ENCODE measurements at regions of chr5 and their contacts with region 1.

Region 1: DNA sequence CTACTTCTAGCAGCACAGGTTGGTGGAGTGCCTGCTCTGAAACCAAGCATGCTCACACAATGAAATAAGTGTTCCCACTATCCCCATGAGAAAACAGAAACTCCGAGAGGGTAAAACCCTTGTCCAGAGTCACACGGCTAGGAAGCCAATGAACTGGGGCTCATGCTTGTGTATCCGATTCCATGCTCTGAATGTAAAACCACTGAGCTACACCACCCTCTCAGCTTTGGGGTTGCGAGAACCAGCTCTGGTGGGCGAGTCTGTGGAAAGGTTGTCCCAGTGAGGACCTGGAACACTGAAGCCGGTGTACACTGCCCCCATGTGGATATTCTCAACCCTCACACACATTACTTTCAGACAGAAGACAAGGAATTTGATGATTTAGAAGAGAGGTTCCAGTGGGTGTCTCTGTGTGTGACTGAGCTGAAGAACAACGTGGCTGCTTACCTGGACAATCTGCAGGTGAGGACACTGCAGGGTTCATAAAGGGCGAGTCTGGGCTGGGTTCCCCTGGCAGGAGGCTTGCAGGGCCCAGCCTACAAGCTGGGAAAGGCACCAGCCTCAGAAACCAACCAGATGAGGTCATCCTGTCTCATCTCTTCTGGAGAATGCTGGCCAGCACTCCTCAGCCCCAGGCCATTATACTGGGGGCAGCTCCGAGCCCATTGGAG is 37.4 kb downstream of the ARHGEF37 start:
- DNase-seq: no peak
- H3K4me3 Mint-ChIP-seq: no peak overlapping the region
- H3K27ac Mint-ChIP-seq: no peak overlapping the region
- H3K4me1 Mint-ChIP-seq: peaks cover 25% of the 10 kb centered on the region
- H3K27me3 Mint-ChIP-seq: no peaks in the 10 kb centered on the region

Region 2: DNA sequence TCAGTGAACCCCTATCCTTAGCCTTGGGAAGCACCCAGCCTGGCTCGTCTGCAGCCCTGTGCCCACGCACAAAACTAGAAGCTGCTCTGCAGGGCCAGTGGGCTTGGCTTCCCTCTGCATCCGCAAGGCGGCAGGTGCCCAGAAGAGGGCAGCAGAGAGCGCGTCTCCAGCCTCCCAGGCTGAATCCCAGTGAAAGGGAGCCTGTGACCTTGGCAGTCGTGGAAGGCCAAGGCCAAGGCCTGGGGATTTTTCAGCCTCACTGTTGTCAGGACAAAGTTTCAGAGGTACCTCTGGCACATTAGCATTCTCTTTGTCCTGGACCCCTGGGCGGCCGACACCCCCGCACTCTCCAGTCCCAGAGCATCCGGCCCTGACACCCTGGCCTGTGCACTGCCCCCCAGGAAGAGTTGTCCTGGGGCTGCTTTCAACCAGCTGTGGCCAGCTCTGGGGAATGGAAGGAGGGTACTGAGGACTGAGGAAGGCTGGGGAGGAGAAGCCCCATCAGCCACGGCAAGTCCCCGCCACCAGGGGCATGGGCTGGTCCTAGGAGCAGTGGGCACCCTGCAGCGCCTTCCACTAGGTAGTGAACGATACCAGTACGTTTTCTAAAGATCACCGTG is 176.0 kb before region 1 on chr5:
- intact Hi-C with region 1: loop called (anchors 2 kb)
- DNase-seq: peak; percentile 52
- H3K4me3 Mint-ChIP-seq: no peak overlapping the region
- H3K27ac Mint-ChIP-seq: peak overlapping the region; percentile 69
- H3K4me1 Mint-ChIP-seq: peaks cover 25% of the 10 kb centered on the region
- H3K27me3 Mint-ChIP-seq: no peaks in the 10 kb centered on the region

Region 3: DNA sequence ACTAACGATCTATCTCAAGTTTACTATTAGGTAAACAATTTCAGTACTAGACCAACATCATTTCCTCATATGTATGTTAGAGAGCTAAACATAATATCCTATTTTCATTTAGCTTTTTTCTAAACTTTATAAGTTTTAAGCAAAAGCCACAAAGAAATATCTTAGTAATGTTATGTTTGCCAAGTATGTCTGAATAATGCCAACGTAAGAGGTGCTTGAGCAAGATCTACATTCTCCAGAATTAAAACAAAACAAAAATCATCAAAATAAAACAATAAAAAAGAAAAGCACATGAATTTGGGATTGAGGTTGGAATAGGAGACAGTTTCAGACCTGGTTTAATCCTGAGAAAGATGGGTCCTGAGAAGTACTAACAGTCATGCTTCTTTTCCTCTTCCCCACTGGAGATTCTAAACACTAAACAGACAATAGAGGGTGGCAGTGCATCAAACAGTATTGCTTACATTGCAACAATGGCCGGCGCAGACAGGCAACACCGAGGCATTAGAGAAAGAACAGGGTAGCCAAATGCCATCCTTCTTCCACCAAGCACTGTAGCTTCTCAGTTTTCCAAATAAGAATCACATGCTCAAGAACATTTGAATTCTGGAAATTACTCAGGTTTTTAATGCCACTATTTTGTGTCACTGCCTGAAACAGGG is 101.1 kb before region 1 on chr5:
- intact Hi-C with region 1: loop called (anchors 5 kb)
- DNase-seq: no peak
- H3K4me3 Mint-ChIP-seq: no peak overlapping the region
- H3K27ac Mint-ChIP-seq: peak overlapping the region; percentile 2
- H3K4me1 Mint-ChIP-seq: peaks cover 66% of the 10 kb centered on the region
- H3K27me3 Mint-ChIP-seq: no peaks in the 10 kb centered on the region

Region 4: GRCh38 chr5:149528281-149529060 is 90.2 kb before region 1 on chr5:
- intact Hi-C with region 1: no loop called
- DNase-seq: no peak
- H3K4me3 Mint-ChIP-seq: no peak overlapping the region
- H3K27ac Mint-ChIP-seq: no peak overlapping the region
- H3K4me1 Mint-ChIP-seq: peaks cover 43% of the 10 kb centered on the region
- H3K27me3 Mint-ChIP-seq: no peaks in the 10 kb centered on the region